ENCODE measurements at regions of chr18 and their contacts with region 1.

Region 1: GRCh38 chr18:21038201-21038600 is 73.4 kb downstream of the ROCK1 start:
- DNase-seq: no peak
- ATAC-seq: no peak
- H3K4me3 Mint-ChIP-seq: no peak overlapping the region
- H3K27ac Mint-ChIP-seq: no peak overlapping the region
- H3K4me1 Mint-ChIP-seq: no peaks in the 10 kb centered on the region
- H3K27me3 Mint-ChIP-seq: no peaks in the 10 kb centered on the region

Region 2: DNA sequence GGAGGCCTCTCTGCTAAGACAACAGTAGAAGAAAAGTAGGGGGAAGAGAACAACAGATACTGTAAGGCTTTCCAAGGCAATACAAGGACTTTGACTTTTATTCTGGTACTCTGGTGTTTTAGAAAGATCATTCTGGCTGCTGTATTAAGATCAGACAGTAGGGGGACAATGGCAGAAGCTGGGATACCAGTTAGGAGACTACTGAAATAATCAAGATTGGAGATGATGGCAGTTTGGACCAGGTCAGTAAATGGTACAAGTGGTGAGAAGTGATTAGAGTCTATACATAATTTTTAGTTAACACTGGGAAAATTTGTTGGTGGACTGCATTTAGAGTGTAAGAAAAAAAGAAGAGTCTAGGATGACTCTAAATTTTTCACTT is 66.3 kb before region 1 on chr18:
- CTCF ChIA-PET with region 1: no interaction called
- POLR2A ChIA-PET with region 1: no interaction called
- intact Hi-C with region 1: loop called in 1 of 2 experiments (anchors 10 kb)
- DNase-seq: no peak
- ATAC-seq: peak; percentile 64
- H3K4me3 Mint-ChIP-seq: no peak overlapping the region
- H3K27ac Mint-ChIP-seq: peak overlapping the region; percentile 22
- H3K4me1 Mint-ChIP-seq: no peaks in the 10 kb centered on the region
- H3K27me3 Mint-ChIP-seq: no peaks in the 10 kb centered on the region

Region 3: GRCh38 chr18:20988726-20989125 is 49.5 kb before region 1 on chr18:
- CTCF ChIA-PET with region 1: no interaction called
- POLR2A ChIA-PET with region 1: no interaction called
- intact Hi-C with region 1: loop called in 1 of 2 experiments (anchors 10 kb)
- DNase-seq: no peak
- ATAC-seq: no peak
- H3K4me3 Mint-ChIP-seq: no peak overlapping the region
- H3K27ac Mint-ChIP-seq: no peak overlapping the region
- H3K4me1 Mint-ChIP-seq: no peaks in the 10 kb centered on the region
- H3K27me3 Mint-ChIP-seq: no peaks in the 10 kb centered on the region

Region 4: DNA sequence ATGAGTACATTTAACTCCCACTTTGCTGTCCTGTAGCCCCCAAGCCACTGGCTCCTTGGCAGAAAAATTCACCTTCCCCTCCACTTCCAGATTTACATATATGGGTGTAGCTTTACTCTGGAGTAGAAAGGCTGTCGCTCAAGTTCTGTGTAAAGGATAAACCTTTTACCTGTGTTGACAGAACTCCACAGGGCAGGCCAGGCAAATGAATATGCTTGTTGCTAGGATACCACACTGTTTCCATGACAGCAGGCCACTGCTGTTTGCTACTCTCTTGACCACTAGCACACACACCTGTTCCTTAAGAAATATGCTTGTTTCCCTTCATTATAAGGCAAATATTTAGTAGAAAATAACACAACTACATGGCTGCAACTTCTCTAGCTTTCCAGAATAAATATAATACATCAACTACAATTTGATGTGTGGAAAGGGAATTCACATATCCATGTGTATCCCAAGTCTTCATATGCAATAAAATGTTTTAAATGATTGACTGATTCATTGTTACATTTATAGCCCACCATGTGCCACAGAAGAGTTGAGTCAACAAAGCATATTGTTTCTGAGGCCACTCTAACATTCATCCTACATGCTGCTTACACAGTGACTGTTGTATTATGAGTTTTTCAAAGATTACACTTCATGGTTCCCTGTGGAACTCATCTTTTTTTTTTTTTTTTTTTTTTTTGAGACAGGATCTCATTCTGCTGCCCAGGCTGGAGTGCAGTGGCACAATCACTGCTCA is 129.6 kb after region 1 on chr18:
- CTCF ChIA-PET with region 1: no interaction called
- POLR2A ChIA-PET with region 1: no interaction called
- intact Hi-C with region 1: no loop called
- DNase-seq: no peak
- ATAC-seq: no peak
- H3K4me3 Mint-ChIP-seq: no peak overlapping the region
- H3K27ac Mint-ChIP-seq: no peak overlapping the region
- H3K4me1 Mint-ChIP-seq: no peaks in the 10 kb centered on the region
- H3K27me3 Mint-ChIP-seq: peaks cover 8% of the 10 kb centered on the region

Region 5: DNA sequence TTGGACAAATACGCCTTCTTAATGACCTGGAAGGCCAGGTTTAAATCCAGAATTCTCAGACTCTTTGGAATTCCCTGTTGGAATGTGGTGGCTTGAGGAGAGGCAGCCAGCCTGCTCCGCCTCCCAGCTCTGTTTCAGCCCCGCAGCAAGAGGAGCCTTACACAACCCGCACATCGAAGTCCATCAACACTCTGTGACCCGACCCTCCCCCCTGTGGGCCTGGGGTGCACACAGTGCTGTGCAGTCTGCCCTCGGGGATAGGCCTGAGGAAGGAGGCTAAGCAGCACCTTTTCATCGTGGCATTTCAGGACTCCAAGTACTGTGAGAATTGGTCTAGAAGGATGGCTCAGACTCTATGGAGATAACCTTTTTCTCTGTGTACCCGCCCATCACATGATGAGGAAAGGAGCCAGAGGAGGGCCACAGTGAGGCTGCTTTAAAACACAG is 277.6 kb after region 1 on chr18:
- CTCF ChIA-PET with region 1: no interaction called
- POLR2A ChIA-PET with region 1: no interaction called
- intact Hi-C with region 1: no loop called
- DNase-seq: no peak
- ATAC-seq: no peak
- H3K4me3 Mint-ChIP-seq: no peak overlapping the region
- H3K27ac Mint-ChIP-seq: no peak overlapping the region
- H3K4me1 Mint-ChIP-seq: no peaks in the 10 kb centered on the region
- H3K27me3 Mint-ChIP-seq: peaks cover 6% of the 10 kb centered on the region

Measured in activated CD4-positive, alpha-beta T cell treated with anti-CD3 and anti-CD28 coated beads for 36 hours (primary cell).